Caco-2 (cell line): ENCODE measurements at regions of chr7 and their contacts with region 1.

Region 1: DNA sequence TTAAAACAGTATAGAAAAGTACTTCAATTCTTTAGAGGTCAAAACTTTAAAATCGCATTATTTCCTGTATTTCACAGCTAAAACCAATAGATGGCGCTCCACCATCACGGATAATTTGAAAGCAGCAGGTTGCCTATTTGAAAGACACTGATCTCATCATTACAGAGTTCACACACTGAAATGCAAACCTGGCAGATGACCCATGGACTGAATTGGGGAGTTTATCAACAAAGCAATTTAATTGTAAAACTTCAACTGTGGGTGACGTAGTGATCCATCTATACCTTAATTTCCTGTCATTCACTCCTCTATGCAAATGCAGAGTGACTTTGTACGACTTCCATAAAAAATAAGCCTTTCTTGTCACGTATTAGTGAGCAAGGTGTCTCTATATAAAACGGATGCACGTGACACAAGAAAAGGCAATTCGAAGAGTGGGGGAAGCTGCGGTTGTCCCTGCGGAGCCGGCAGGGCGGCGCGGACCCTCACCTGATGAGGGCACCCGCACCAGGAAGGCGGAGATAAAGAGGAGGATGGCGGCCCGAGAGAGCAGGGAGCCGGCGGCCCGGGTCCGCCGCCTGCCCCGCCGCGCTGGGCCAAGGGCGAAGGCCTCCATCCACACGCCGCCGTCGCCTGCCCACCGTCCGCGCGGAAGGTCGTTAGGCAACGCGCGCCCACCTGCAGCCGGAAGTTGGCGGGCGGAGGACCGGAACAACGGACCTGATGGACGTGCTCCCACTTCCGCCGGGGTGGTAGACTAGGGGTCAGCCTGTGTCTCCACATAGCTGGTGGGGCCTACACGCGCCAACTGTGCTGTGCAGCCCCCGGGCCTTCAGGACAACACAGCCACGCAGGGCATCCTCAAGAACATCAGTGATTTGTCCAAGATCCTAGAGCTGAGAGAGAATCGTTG is at the start of gene ZPBP:
- DNase-seq: peak in 1 of 2 experiments; percentile 40
- H3K4me3 ChIP-seq: no peak within 1 kb of the TSS
- H3K4me3 Mint-ChIP-seq: no peak within 1 kb of the TSS
- H3K27ac Mint-ChIP-seq: no peak within 1 kb of the TSS
- H3K4me1 ChIP-seq: no peaks in the 10 kb centered on the region
- H3K4me1 Mint-ChIP-seq: no peaks in the 10 kb centered on the region
- H3K27me3 ChIP-seq: no peaks in the 10 kb centered on the region
- H3K27me3 Mint-ChIP-seq: peaks cover 3% of the 10 kb centered on the region
- CTCF ChIP-seq: peak; percentile 54 to 74
- total RNA-seq, gene ZPBP: not detected in 2 replicates

Region 2: GRCh38 chr7:50206453-50207250 is 113.8 kb after region 1 on chr7:
- CTCF ChIA-PET with region 1: interaction called, 4 read pairs
- POLR2A ChIA-PET with region 1: no interaction called
- intact Hi-C with region 1: loop called (anchors 2 kb)
- DNase-seq: no peak
- H3K4me3 ChIP-seq: no peak overlapping the region
- H3K4me3 Mint-ChIP-seq: no peak overlapping the region
- H3K27ac Mint-ChIP-seq: no peak overlapping the region
- H3K4me1 ChIP-seq: no peaks in the 10 kb centered on the region
- H3K4me1 Mint-ChIP-seq: peaks cover 12% of the 10 kb centered on the region
- H3K27me3 ChIP-seq: no peaks in the 10 kb centered on the region; the same call in 1 of the 2 replicates
- H3K27me3 Mint-ChIP-seq: peaks cover 37% of the 10 kb centered on the region
- CTCF ChIP-seq: no peak

Region 3: DNA sequence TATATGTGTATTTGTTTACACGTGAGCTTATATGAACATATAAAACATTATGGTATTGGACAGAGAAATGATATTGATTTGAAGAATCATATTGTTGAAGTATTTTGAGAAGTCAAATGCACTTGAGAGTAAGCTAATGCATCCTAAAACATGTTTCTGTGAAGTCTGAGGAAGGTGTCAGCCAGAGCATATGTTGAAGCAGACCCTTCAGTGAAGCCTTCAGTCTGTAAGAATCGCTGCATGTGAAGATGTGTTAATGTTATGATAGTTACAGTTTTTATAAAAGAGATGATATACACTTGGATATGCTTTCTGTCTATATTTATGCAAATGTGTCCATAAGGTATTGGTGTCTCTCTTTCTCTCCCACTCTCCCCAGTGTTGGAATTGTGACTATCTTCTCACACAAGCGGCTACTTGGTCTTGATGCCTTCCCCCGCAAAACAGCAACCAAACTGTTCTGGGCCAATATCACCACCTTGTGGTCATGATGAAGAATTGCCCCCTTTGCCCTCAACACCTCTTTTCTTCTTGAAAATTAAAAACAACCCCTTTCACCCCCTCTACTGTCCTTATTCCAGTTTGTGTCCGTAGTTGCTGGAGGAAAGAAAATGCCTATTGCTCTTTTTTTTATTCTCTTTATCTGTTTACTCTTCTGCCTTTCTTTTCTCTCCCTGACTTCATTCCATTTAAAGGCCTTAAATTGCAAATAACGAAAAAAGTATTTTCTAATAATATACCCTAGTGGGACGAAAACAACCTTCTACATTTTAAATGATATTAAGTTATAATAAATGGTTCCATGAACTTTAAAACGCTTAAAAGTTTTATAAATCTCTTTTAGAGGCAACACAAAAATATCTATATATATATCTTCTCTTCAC is 276.6 kb after region 1 on chr7:
- CTCF ChIA-PET with region 1: no interaction called
- POLR2A ChIA-PET with region 1: no interaction called
- intact Hi-C with region 1: loop called (anchors 1 kb)
- DNase-seq: peak in 1 of 2 experiments; percentile 40
- H3K4me3 ChIP-seq: no peak overlapping the region
- H3K4me3 Mint-ChIP-seq: no peak overlapping the region
- H3K27ac Mint-ChIP-seq: no peak overlapping the region
- H3K4me1 ChIP-seq: no peaks in the 10 kb centered on the region
- H3K4me1 Mint-ChIP-seq: no peaks in the 10 kb centered on the region
- H3K27me3 ChIP-seq: no peaks in the 10 kb centered on the region; the same call in 1 of the 2 replicates
- H3K27me3 Mint-ChIP-seq: peaks cover 10% of the 10 kb centered on the region
- CTCF ChIP-seq: peak; percentile 39 to 73

Region 4: GRCh38 chr7:50418086-50418515 is 325.3 kb after region 1 on chr7:
- CTCF ChIA-PET with region 1: interaction called, 6 read pairs
- POLR2A ChIA-PET with region 1: no interaction called
- intact Hi-C with region 1: loop called (anchors 1 kb)
- DNase-seq: peak; percentile 86 to 89
- H3K4me3 ChIP-seq: no peak overlapping the region
- H3K4me3 Mint-ChIP-seq: no peak overlapping the region
- H3K27ac Mint-ChIP-seq: no peak overlapping the region
- H3K4me1 ChIP-seq: no peaks in the 10 kb centered on the region; the same call in 1 of the 2 replicates
- H3K4me1 Mint-ChIP-seq: peaks cover 2% of the 10 kb centered on the region
- H3K27me3 ChIP-seq: no peaks in the 10 kb centered on the region
- H3K27me3 Mint-ChIP-seq: no peaks in the 10 kb centered on the region
- CTCF ChIP-seq: peak; percentile 88 to 97

Region 5: GRCh38 chr7:50610521-50611277 is 517.9 kb after region 1 on chr7:
- CTCF ChIA-PET with region 1: no interaction called
- POLR2A ChIA-PET with region 1: no interaction called
- intact Hi-C with region 1: loop called (anchors 1 kb)
- DNase-seq: no peak
- H3K4me3 ChIP-seq: no peak overlapping the region
- H3K4me3 Mint-ChIP-seq: no peak overlapping the region
- H3K27ac Mint-ChIP-seq: no peak overlapping the region
- H3K4me1 ChIP-seq: peaks cover 9% of the 10 kb centered on the region
- H3K4me1 Mint-ChIP-seq: peaks cover 13% of the 10 kb centered on the region
- H3K27me3 ChIP-seq: no peaks in the 10 kb centered on the region
- H3K27me3 Mint-ChIP-seq: no peaks in the 10 kb centered on the region
- CTCF ChIP-seq: no peak

Region 6: GRCh38 chr7:50679218-50680007 is 586.6 kb after region 1 on chr7:
- CTCF ChIA-PET with region 1: no interaction called
- POLR2A ChIA-PET with region 1: no interaction called
- intact Hi-C with region 1: loop called (anchors 1 kb)
- DNase-seq: peak in 1 of 2 experiments; percentile 22
- H3K4me3 ChIP-seq: no peak overlapping the region
- H3K4me3 Mint-ChIP-seq: no peak overlapping the region
- H3K27ac Mint-ChIP-seq: no peak overlapping the region
- H3K4me1 ChIP-seq: no peaks in the 10 kb centered on the region
- H3K4me1 Mint-ChIP-seq: no peaks in the 10 kb centered on the region
- H3K27me3 ChIP-seq: no peaks in the 10 kb centered on the region
- H3K27me3 Mint-ChIP-seq: no peaks in the 10 kb centered on the region
- CTCF ChIP-seq: peak in 1 of 2 experiments; percentile 15